AG04449 (cell line): ENCODE measurements at regions of chr5 and their contacts with region 1.

Region 1: GRCh38 chr5:93800988-93801811 is 59.8 kb upstream of the POU5F2 start:
- DNase-seq: no peak
- H3K4me3 ChIP-seq: no peak overlapping the region
- CTCF ChIP-seq: peak; percentile 47

Region 2: GRCh38 chr5:93582677-93583438 is 218.3 kb before region 1 on chr5 and contains the start of gene NR2F1:
- CTCF ChIA-PET with region 1: interaction called, 18 read pairs
- POLR2A ChIA-PET with region 1: interaction called, 3 read pairs
- DNase-seq: peak; percentile 85
- H3K4me3 ChIP-seq: peak within 1 kb of the TSS; percentile 80
- CTCF ChIP-seq: no peak

Region 3: GRCh38 chr5:93607367-93608258 is 193.6 kb before region 1 on chr5:
- CTCF ChIA-PET with region 1: interaction called, 53 read pairs
- POLR2A ChIA-PET with region 1: no interaction called
- DNase-seq: no peak
- H3K4me3 ChIP-seq: peak overlapping the region; percentile 23
- CTCF ChIP-seq: peak; percentile 51

Region 4: GRCh38 chr5:93674138-93674537 is 127.1 kb before region 1 on chr5:
- CTCF ChIA-PET with region 1: no interaction called
- POLR2A ChIA-PET with region 1: no interaction called
- DNase-seq: no peak
- H3K4me3 ChIP-seq: no peak overlapping the region
- CTCF ChIP-seq: no peak

Region 5: GRCh38 chr5:93782978-93783377 is 18.2 kb before region 1 on chr5:
- CTCF ChIA-PET with region 1: interaction called, 19 read pairs
- POLR2A ChIA-PET with region 1: no interaction called
- DNase-seq: no peak
- H3K4me3 ChIP-seq: no peak overlapping the region
- CTCF ChIP-seq: no peak

Region 6: DNA sequence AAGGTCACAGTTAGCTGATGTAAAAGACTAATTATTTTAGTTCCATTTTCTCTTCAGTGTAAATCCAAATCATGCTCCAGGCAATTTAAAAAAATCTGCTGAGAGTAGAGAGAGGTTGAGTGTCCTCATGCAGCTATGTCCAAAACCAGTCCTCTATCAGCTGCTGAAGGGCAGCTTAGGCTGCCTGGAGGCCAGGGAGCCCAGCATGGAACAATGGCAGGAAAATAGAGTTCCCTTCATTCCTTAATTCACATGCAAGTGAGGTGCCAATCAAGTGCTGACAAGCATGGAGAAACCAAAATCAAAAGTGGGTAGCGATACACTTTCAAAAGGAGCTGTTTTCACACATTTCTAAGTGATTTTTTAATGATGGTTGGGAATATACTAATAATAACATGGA is 18.5 kb after region 1 on chr5:
- CTCF ChIA-PET with region 1: interaction called, 20 read pairs
- POLR2A ChIA-PET with region 1: no interaction called
- DNase-seq: no peak
- H3K4me3 ChIP-seq: no peak overlapping the region
- CTCF ChIP-seq: no peak